Left cardiac atrium (tissue), 4 donors: ENCODE measurements at regions of chr2 and their contacts with region 1.

Region 1: GRCh38 chr2:133755480-133756300 is 187.4 kb upstream of the NCKAP5 start:
- DNase-seq: no peak
- ATAC-seq: peak; percentile 76 to 79

Region 2: DNA sequence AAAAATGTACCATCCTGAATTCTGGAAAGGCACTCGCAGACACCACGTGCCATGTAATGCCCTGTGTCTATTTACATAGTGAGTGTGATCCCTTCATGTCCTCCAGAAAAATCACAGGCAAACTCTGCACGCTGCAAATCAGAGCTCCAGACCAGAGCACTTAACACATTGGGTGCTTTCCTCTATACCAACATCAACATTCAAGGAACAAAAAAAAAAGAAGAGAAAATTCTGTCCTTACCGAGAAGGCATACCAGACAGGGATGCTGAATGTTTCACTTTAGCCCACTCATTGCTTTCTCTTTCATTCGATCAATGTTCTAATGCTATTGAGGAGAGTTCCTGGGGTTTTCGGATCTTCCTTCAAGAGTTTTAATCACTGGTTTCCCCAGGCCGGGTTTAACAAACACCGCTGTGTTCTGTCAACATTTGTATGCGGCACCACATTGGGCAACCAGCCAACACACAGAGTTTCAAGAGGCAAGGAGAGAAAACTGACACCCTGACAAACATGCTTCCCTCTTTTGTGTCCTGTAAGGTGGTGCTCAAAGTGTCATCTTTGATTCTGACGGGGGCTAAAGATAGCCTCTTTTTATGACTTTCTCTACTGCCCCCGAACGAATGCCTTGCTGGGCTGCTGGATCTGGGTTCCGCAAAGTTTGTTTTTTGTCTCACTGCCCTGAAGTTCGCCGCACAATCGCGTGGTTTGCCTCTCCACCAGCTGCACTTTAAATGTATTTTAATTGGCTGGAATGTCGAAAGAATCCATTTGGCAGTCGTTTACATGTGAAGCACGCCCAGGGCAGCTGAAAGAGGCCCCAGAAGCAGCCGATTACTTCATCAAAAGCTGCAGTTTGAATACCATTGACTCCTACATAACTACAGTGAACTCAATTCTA is 81.0 kb before region 1 on chr2:
- intact Hi-C with region 1: loop called in 1 of 2 experiments (anchors 10 kb)
- DNase-seq: peak; percentile 69
- ATAC-seq: peak; percentile 76 to 80